Ascending aorta (tissue), 2 donors: ENCODE measurements at regions of chr15 and their contacts with region 1.

Region 1: DNA sequence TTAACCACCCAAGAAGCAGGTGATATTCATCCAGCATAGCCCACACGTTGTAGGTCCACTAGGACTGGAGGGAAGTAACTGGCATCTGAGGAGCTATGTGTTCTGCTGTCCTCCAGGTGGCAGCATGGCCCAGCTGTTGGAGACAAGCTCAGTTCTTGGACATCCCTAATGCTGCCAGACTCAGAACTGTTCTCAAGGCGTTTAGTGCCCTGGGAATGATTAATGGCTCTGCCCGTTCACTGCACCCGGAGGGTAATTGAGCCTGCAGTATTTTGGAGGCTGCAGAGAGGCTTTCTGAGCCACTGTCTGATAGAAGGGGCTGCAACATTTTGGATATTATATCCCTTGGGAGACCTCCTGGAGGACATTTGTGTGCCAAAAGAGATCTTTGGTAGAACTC is 521.2 kb upstream of the SEMA6D start:
- DNase-seq: peak in 1 of 2 donors; percentile 85
- H3K4me3 ChIP-seq: no peak overlapping the region
- H3K27ac ChIP-seq: no peak overlapping the region
- H3K4me1 ChIP-seq: no peaks in the 10 kb centered on the region
- H3K27me3 ChIP-seq: no peaks in the 10 kb centered on the region
- CTCF ChIP-seq: peak; percentile 77 to 87 (median 81)

Region 2: GRCh38 chr15:46892687-46893086 is 303.4 kb before region 1 on chr15:
- intact Hi-C with region 1: no loop called
- DNase-seq: no peak
- H3K4me3 ChIP-seq: no peak overlapping the region
- H3K27ac ChIP-seq: no peak overlapping the region
- H3K4me1 ChIP-seq: no peaks in the 10 kb centered on the region
- H3K27me3 ChIP-seq: no peaks in the 10 kb centered on the region
- CTCF ChIP-seq: no peak

Region 3: GRCh38 chr15:47289656-47290055 is 93.6 kb after region 1 on chr15:
- intact Hi-C with region 1: no loop called
- DNase-seq: no peak
- H3K4me3 ChIP-seq: no peak overlapping the region
- H3K27ac ChIP-seq: no peak overlapping the region
- H3K4me1 ChIP-seq: peaks cover 0 to 2% of the 10 kb centered on the region in 2 donors
- H3K27me3 ChIP-seq: no peaks in the 10 kb centered on the region
- CTCF ChIP-seq: no peak

Region 4: DNA sequence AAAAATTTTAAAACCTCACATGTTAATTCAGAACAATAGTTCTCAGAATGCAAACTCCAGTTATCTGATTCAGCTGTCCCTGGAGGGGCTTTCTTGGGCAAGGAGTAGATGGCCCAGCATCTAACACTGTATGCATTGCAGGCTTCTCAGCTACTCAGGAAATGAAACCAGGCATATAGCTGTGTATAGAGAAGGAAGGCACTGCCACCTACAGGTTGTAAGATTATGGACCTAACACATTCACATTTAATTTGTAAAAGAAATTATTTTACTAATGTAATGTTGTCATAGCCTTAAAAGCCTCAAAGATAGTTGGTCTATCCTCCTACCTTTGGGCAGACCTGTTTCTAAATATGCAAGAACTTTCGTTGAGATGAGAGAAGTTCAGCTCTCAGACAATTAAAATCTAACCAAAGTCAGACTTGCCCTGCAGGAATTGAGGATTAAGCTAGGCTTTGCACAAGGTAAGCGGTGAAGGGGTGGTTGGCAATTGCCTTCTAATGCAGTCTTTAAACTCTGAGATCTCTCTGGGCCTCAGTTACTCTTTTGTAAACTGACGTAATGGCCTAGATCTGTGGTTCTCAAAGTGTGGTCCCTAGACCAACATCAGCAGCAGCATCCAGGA is 792.0 kb after region 1 on chr15:
- intact Hi-C with region 1: loop called (anchors 2 kb)
- DNase-seq: no peak
- H3K4me3 ChIP-seq: no peak overlapping the region
- H3K27ac ChIP-seq: no peak overlapping the region
- H3K4me1 ChIP-seq: no peaks in the 10 kb centered on the region
- H3K27me3 ChIP-seq: no peaks in the 10 kb centered on the region
- CTCF ChIP-seq: peak; percentile 52 to 71 (median 56)

Region 5: GRCh38 chr15:48352474-48353072 is 1156.5 kb after region 1 on chr15:
- intact Hi-C with region 1: loop called (anchors 1 kb)
- DNase-seq: peak in 1 of 2 donors; percentile 79
- H3K4me3 ChIP-seq: no peak overlapping the region
- H3K27ac ChIP-seq: no peak overlapping the region
- H3K4me1 ChIP-seq: peaks cover 0 to 11% of the 10 kb centered on the region in 2 donors
- H3K27me3 ChIP-seq: no peaks in the 10 kb centered on the region
- CTCF ChIP-seq: peak; percentile 41 to 81 (median 73)